ENCODE measurements at regions of chr17 and their contacts with region 1.

Region 1: GRCh38 chr17:76397687-76398487 is 13.5 kb downstream of the SPHK1 start:
- DNase-seq: peak; percentile 97
- ATAC-seq: peak; percentile 57
- H3K4me3 ChIP-seq: no peak overlapping the region
- H3K27ac ChIP-seq: peak overlapping the region; percentile 27
- H3K4me1 ChIP-seq: peaks cover 44% of the 10 kb centered on the region
- H3K27me3 ChIP-seq: no peaks in the 10 kb centered on the region
- CTCF ChIP-seq: peak; percentile 99

Region 2: DNA sequence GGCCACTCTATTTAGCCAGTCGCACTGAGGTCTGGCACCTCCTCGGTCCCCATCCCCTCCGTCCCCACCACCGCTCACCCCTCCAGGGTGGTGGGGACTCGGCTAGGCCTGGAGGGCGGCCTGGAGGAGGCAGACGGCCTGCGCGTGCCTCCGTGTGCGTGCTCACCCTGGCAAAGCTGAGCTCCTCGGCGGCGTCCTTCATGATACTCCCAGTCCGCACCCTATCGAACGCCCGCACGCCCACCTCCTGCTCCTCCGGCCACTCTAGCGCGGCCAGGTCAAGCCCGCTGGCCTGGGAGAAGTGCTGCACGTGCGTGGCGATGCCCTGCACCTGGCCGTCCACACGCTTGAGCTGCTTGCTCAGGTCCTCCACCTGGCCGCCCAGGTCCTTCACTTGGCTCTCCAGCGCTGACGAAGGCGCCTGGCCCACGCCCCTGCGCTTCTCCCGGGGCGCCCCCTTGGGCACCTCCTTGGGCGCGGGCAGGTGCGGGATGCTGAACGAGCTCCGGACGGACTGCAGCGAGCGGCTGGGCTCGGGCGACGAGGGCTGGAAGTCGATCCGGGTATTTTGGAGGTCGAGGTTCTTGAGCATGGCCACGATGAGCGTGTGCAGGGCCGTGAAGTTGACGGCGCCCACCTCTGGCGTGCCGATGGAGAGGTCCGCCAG is 90.5 kb before region 1 on chr17:
- CTCF ChIA-PET with region 1: interaction called, 20 read pairs
- POLR2A ChIA-PET with region 1: no interaction called
- intact Hi-C with region 1: loop called (anchors 1 kb)
- DNase-seq: no peak
- ATAC-seq: no peak
- H3K4me3 ChIP-seq: no peak overlapping the region
- H3K27ac ChIP-seq: no peak overlapping the region
- H3K4me1 ChIP-seq: 0 out of 2 replicates have a peak, but pooled peaks cover 7% of the 10 kb centered on the region
- H3K27me3 ChIP-seq: no peaks in the 10 kb centered on the region
- CTCF ChIP-seq: no peak

Region 3: DNA sequence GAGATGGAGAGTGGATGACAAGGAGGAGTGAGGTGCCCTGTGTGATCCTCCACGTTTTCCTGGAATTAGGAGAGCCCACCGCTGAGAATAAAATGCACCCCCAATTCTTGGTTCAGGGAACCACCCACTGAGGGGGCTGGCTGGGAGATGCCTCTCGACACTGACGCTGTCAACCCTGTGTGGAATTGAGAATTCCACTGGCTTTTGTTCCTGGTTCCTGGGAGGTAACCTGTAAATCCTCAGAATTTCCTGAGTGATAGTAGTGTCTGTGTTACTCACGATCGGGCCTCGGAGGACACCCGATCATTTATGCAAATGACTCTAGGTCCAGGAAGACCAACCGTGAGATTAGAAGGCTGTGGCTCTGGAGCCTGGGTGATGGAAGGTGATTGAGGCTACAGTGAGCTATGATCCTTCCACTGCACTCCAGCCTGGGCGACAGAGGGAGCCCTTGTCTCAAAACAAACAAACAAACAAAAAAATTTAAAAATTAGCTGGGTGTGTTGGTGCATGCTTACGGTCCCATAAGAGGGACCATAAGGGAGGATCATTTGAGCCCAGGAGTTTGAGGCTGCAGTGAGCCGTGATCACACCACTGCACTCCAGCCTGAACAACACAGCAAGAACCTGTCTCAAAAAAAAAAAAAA is 32.5 kb before region 1 on chr17:
- CTCF ChIA-PET with region 1: interaction called, 78 read pairs
- POLR2A ChIA-PET with region 1: interaction called, 20 read pairs
- intact Hi-C with region 1: loop called (anchors 1 kb)
- DNase-seq: peak; percentile 59
- ATAC-seq: peak; percentile 80
- H3K4me3 ChIP-seq: no peak overlapping the region
- H3K27ac ChIP-seq: no peak overlapping the region
- H3K4me1 ChIP-seq: peaks cover 6% of the 10 kb centered on the region
- H3K27me3 ChIP-seq: no peaks in the 10 kb centered on the region
- CTCF ChIP-seq: peak; percentile 84

Region 4: GRCh38 chr17:76370261-76370993 is 27.5 kb before region 1 on chr17:
- CTCF ChIA-PET with region 1: interaction called, 78 read pairs
- POLR2A ChIA-PET with region 1: interaction called, 20 read pairs
- intact Hi-C with region 1: loop called (anchors 1 kb)
- DNase-seq: peak; percentile 99
- ATAC-seq: peak; percentile 97
- H3K4me3 ChIP-seq: peak overlapping the region; percentile 8; the same call in 1 of the 2 replicates
- H3K27ac ChIP-seq: peak overlapping the region; percentile 80
- H3K4me1 ChIP-seq: peaks cover 28% of the 10 kb centered on the region
- H3K27me3 ChIP-seq: no peaks in the 10 kb centered on the region
- CTCF ChIP-seq: peak; percentile 100

Region 5: DNA sequence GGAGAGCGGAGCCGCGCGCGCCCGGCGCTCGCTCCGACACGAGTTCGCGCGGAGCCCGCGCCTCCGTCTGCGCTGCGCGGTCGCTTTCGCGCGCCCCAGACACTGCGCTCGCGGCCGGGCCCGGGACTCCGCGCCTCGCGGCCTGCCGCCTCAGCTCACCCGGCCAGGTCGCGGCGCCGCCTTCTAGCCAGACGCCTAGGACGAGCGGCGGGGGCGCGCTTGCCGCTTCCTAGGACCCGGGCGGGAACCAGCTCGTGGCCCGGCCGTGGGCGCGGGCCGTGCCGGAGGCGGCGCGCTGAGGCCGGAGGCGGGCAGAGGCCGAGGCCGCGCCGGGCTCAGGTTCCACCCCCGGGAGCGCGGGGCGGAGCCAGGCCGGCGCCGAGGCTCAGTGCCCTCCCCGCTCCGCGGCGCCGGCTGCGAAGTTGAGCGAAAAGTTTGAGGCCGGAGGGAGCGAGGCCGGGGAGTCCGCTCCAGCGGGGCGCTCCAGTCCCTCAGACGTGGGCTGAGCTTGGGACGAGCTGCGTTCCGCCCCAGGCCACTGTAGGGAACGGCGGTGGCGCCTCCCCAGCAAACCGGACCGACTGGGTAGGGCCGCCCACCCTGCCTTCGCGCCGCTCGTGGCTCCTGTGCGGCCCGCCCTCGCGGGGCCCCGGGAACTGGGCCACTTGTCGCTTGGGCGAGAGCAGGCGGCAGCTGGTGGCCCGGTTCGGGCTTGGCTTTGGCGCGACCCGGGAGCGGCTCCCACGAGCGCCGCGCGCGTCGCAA is 13.5 kb before region 1 on chr17 and contains the start of gene SPHK1:
- CTCF ChIA-PET with region 1: interaction called, 14 read pairs
- POLR2A ChIA-PET with region 1: no interaction called
- intact Hi-C with region 1: loop called (anchors 1 kb)
- DNase-seq: peak; percentile 89
- ATAC-seq: peak; percentile 68
- H3K4me3 ChIP-seq: peak within 1 kb of the TSS; percentile 73
- H3K27ac ChIP-seq: peak within 1 kb of the TSS; percentile 60
- H3K4me1 ChIP-seq: peaks cover 21% of the 10 kb centered on the region
- H3K27me3 ChIP-seq: no peaks in the 10 kb centered on the region
- CTCF ChIP-seq: no peak
- total RNA-seq, gene SPHK1: 54.2 and 59.7 TPM in 2 replicates

Region 6: GRCh38 chr17:76458580-76459490 is 60.9 kb after region 1 on chr17:
- CTCF ChIA-PET with region 1: interaction called, 16 read pairs
- POLR2A ChIA-PET with region 1: interaction called, 3 read pairs
- intact Hi-C with region 1: no loop called
- DNase-seq: peak; percentile 86
- ATAC-seq: peak; percentile 97
- H3K4me3 ChIP-seq: no peak overlapping the region
- H3K27ac ChIP-seq: no peak overlapping the region
- H3K4me1 ChIP-seq: no peaks in the 10 kb centered on the region
- H3K27me3 ChIP-seq: no peaks in the 10 kb centered on the region
- CTCF ChIP-seq: peak; percentile 91

Measured in PC-3 (cell line).